ENCODE measurements at regions of chr11 and their contacts with region 1.

Region 1: GRCh38 chr11:43852057-43852636 is 28.5 kb upstream of the ALKBH3 start:
- DNase-seq: peak in 1 of 2 donors; percentile 33
- ATAC-seq: peak; percentile 78 to 92 (median 84)
- H3K4me3 ChIP-seq: no peak overlapping the region
- H3K27ac ChIP-seq: no peak overlapping the region
- H3K4me1 ChIP-seq: no peaks in the 10 kb centered on the region
- H3K27me3 ChIP-seq: no peaks in the 10 kb centered on the region
- CTCF ChIP-seq: peak; percentile 88

Region 2: DNA sequence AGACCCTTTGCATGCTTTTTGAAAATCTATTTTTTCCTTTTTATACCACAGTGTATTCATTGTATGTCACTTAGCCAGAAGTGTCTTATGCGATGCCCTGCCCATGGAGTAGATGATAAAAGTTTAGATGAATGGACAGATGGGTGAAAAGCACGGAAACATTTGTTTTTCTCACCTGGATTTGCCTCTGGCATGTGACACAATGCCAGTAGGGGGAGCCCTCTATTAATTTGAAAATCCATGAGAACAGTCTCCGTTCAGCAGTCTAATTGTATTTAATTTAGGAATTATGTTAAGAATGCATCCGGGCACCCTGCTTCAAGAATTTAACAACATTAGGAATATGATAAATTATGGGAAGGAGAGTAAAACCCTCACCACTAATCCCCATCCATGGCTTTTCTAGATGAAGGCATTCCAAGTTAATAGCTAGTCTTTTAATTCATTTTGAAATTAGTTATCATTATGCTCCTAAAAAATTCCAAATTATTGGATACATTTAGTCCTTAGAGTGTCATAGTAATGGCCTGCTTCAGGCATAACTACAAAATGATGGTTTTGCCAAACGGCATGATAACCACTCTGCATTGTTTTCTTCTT is 26.8 kb before region 1 on chr11:
- intact Hi-C with region 1: loop called in 1 of 2 experiments (anchors 2 kb)
- DNase-seq: no peak
- ATAC-seq: peak in 2 of 4 donors; percentile 28 to 78
- H3K4me3 ChIP-seq: no peak overlapping the region
- H3K27ac ChIP-seq: no peak overlapping the region
- H3K4me1 ChIP-seq: peaks cover 32% of the 10 kb centered on the region
- H3K27me3 ChIP-seq: no peaks in the 10 kb centered on the region
- CTCF ChIP-seq: peak; percentile 72